Endothelial cell of umbilical vein (primary cell): ENCODE measurements at regions of chr3 and their contacts with region 1.

Region 1: GRCh38 chr3:138923531-138923994 is 23.4 kb downstream of the FOXL2 start:
- DNase-seq: peak; percentile 85
- H3K4me3 ChIP-seq: no peak overlapping the region
- H3K27ac ChIP-seq: no peak overlapping the region
- H3K4me1 ChIP-seq: peaks cover 7% of the 10 kb centered on the region
- H3K27me3 ChIP-seq: peaks cover 2% of the 10 kb centered on the region in 2 experiments
- CTCF ChIP-seq: peak; percentile 86
- POLR2A ChIP-seq: no peak

Region 2: DNA sequence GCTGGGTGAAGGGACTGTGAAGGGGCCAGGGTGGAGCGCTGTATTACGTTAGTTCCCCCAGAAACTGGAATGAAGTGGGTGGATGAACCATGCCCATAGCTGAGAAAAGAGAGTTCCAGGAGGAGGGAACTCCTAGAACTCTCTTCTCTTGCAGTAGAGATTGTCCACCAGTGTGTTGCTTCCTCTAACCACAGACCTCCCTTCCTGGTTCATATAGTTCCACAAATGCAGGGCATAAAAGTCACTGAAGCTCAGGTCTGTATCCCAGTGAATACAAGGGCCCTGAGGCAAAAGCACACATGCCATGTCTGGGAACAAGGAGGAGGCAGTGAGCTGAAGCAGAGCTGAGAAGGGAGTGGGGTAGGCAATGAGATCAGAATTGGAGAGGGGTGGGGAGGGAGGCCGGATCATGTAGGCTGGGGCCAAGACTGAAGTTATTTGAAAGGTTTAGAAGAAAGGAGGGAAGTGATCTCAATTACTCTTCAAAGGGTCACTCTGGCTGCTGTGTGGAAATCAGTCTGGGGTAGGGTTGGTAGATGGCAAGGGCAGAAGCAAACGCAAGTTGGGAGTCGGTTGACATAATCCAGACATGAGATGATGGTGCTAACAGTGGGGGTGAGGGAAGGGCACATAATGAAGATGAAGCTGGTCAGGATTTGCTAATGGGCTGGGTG is 797.9 kb before region 1 on chr3:
- CTCF ChIA-PET with region 1: no interaction called
- POLR2A ChIA-PET with region 1: no interaction called
- dilution Hi-C with region 1: no loop called
- intact Hi-C with region 1: no loop called
- DNase-seq: no peak
- H3K4me3 ChIP-seq: no peak overlapping the region
- H3K27ac ChIP-seq: no peak overlapping the region
- H3K4me1 ChIP-seq: no peaks in the 10 kb centered on the region
- H3K27me3 ChIP-seq: peaks cover 2 to 3% of the 10 kb centered on the region in 2 experiments
- CTCF ChIP-seq: no peak
- POLR2A ChIP-seq: no peak

Region 3: GRCh38 chr3:138186803-138187295 is 736.7 kb before region 1 on chr3:
- CTCF ChIA-PET with region 1: no interaction called
- POLR2A ChIA-PET with region 1: no interaction called
- dilution Hi-C with region 1: no loop called
- intact Hi-C with region 1: loop called (anchors 10 kb)
- DNase-seq: peak; percentile 94
- H3K4me3 ChIP-seq: peak overlapping the region; percentile 74 to 86 (median 81)
- H3K27ac ChIP-seq: peak overlapping the region; percentile 93
- H3K4me1 ChIP-seq: peaks cover 10% of the 10 kb centered on the region
- H3K27me3 ChIP-seq: peaks cover 2 to 5% of the 10 kb centered on the region in 2 experiments
- CTCF ChIP-seq: no peak
- POLR2A ChIP-seq: no peak

Region 4: GRCh38 chr3:138459619-138460535 is 463.7 kb before region 1 on chr3:
- CTCF ChIA-PET with region 1: interaction called, 10 read pairs
- POLR2A ChIA-PET with region 1: no interaction called
- dilution Hi-C with region 1: no loop called
- intact Hi-C with region 1: no loop called
- DNase-seq: no peak
- H3K4me3 ChIP-seq: no peak overlapping the region
- H3K27ac ChIP-seq: no peak overlapping the region
- H3K4me1 ChIP-seq: no peaks in the 10 kb centered on the region
- H3K27me3 ChIP-seq: no peaks in the 10 kb centered on the region
- CTCF ChIP-seq: no peak
- POLR2A ChIP-seq: no peak

Region 5: GRCh38 chr3:138600100-138600745 is 323.3 kb before region 1 on chr3:
- CTCF ChIA-PET with region 1: interaction called, 173 read pairs
- POLR2A ChIA-PET with region 1: no interaction called
- dilution Hi-C with region 1: no loop called
- intact Hi-C with region 1: no loop called
- DNase-seq: no peak
- H3K4me3 ChIP-seq: no peak overlapping the region
- H3K27ac ChIP-seq: no peak overlapping the region
- H3K4me1 ChIP-seq: no peaks in the 10 kb centered on the region
- H3K27me3 ChIP-seq: no peaks in the 10 kb centered on the region
- CTCF ChIP-seq: no peak
- POLR2A ChIP-seq: no peak

Region 6: DNA sequence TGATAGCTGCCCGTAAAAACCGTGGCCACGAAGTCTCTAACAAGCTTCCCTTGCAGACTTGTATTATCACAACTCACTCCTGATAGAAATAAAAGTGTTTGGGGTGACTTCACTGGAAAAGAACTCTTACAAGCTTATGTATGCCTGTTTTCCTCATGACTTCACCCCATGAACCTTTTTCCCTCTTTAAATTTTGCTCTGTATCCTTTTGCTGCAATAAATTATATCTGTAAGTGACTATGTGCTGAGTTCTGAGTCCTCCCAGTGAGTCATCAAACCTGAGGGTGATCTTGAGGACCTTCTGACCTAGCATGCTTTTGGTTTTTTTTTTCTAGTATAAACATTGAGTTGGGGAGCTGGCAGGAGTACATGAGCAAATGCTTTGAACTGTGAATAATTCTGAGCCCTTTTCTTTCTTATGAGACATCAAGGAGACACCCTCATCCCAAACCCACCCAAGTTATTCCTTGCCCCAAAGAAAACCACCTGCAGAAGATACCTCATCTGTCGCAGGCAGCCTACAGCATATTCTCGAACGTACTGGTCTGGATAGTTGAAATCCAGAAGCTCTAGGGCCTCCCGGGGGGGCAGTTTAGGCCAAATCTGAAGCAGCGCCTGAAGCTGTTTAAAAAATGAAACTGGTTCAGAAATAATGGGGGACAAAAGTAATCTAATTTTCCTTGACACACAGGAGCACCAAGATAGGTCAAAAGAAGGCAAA is 229.1 kb before region 1 on chr3:
- CTCF ChIA-PET with region 1: interaction called, 862 read pairs
- POLR2A ChIA-PET with region 1: no interaction called
- dilution Hi-C with region 1: no loop called
- intact Hi-C with region 1: loop called (anchors 1 kb)
- DNase-seq: peak; percentile 58
- H3K4me3 ChIP-seq: no peak overlapping the region
- H3K27ac ChIP-seq: no peak overlapping the region
- H3K4me1 ChIP-seq: no peaks in the 10 kb centered on the region
- H3K27me3 ChIP-seq: no peaks in the 10 kb centered on the region
- CTCF ChIP-seq: no peak
- POLR2A ChIP-seq: no peak

Region 7: GRCh38 chr3:138799822-138800221 is 123.7 kb before region 1 on chr3:
- CTCF ChIA-PET with region 1: no interaction called
- POLR2A ChIA-PET with region 1: no interaction called
- dilution Hi-C with region 1: no loop called
- intact Hi-C with region 1: no loop called
- DNase-seq: no peak
- H3K4me3 ChIP-seq: no peak overlapping the region
- H3K27ac ChIP-seq: no peak overlapping the region
- H3K4me1 ChIP-seq: no peaks in the 10 kb centered on the region
- H3K27me3 ChIP-seq: no peaks in the 10 kb centered on the region
- CTCF ChIP-seq: no peak
- POLR2A ChIP-seq: no peak

Region 8: DNA sequence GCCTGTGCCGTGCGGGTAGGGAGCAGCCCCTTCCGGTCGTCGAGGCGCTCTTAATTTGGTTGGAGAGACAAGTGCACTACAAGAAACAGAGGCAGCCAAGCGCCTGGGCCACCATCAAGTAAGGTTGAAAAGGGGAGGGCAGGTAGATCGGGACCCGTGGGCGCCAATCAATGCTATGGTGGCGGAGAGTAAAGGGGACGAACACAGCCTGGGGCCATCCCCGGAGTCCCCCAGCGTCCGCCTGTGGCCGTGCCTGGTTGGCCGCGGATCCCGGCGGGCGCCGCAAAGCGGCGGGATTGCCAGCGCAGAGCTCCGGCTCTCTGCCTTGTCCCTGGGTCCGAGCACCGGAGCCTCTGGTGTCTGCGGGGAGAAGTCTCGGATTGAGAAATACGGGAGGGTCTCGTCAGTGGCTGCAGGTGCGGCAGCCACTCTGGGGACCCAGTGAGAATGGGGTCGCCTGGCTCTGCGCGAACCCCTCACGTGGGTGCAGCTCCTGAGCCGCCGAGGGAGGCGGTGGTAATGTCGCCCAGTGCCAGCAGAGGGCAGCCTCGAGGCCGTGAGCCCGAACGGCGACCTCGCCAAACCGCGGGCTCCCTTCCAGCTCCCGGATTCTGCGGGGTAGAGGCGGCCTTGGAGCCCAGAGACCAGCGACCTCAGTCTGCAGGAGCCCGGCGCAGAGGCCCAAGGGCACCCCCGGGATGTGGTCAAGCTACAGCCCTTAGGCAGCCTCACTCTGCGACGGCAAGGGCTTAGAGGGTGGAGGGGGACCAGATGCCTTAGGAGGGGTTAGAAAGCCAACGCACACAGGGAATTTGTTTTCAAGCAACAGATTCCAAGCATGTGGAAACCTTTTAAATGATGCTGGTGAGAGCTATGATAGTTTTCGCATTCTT is 12.5 kb after region 1 on chr3:
- CTCF ChIA-PET with region 1: interaction called, 59 read pairs
- POLR2A ChIA-PET with region 1: no interaction called
- dilution Hi-C with region 1: no loop called
- intact Hi-C with region 1: no loop called
- DNase-seq: peak; percentile 59
- H3K4me3 ChIP-seq: peak overlapping the region in 2 of 3 experiments; percentile 0 to 25
- H3K27ac ChIP-seq: no peak overlapping the region
- H3K4me1 ChIP-seq: peaks cover 7% of the 10 kb centered on the region
- H3K27me3 ChIP-seq: peaks cover 54 to 66% of the 10 kb centered on the region in 2 experiments
- CTCF ChIP-seq: peak; percentile 84 to 94
- POLR2A ChIP-seq: no peak